ENCODE measurements at regions of chr2 and their contacts with region 1.

Region 1: DNA sequence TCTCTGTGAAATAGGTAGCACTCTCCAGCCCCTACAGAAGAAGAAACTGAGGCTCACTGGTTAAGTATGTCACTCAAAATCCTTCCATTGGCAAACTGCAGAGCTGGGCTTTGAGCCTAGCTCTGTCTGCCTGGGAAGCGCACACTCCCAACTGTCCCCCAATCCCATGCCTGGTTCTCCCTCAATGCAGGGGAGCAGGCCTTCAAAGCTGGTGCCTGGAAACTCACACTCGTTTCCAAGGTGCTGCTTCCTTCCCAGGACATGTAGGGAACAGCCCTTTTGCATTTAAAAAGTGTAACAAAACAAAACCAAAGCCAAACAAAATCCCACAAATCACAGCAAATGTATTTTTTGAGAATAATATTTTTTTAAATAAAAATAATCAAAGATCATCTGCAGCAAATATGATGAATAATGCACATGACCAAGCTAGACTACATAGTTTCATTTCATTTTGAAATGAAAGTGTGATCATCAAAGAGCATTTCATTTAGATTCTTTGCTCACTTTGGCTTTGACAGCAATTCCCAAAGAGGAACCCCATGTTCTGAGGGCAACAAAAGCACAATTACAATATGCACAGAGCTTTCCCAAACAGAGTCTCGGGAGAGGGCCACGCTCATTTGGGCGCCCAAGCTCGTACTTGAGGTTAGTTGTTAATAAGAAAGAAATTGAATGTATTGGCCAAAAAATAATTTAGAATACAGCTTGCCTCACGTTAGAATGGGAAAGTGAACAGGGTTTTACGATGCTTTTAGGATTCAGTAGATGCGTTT is 96.7 kb upstream of the ACKR3 start:
- DNase-seq: no peak
- H3K4me3 ChIP-seq: no peak overlapping the region
- H3K27ac ChIP-seq: no peak overlapping the region
- H3K4me1 ChIP-seq: no peaks in the 10 kb centered on the region
- H3K27me3 ChIP-seq: no peaks in the 10 kb centered on the region
- CTCF ChIP-seq: no peak
- POLR2A ChIP-seq: no peak

Region 2: DNA sequence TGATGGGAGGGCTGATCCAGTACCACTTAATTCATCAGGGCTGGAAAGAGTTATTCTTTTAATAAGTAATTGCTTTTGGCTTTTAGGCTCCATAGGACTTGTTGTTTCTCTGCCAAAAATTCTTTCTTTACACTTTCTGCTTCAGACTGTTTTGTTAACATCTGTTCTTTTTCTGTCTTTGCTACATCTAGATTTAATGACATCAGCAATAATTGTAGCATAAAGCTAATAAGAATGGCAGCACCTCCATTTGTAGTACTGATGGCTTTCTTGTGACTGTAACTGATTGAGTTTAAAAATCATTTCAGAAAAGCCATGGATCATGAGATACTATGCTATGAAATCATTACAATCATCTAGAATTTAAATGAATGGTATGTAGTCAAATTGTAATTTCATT is 50.3 kb after region 1 on chr2:
- intact Hi-C with region 1: loop called (anchors 2 kb)
- DNase-seq: no peak
- H3K4me3 ChIP-seq: no peak overlapping the region
- H3K27ac ChIP-seq: no peak overlapping the region
- H3K4me1 ChIP-seq: no peaks in the 10 kb centered on the region
- H3K27me3 ChIP-seq: no peaks in the 10 kb centered on the region
- CTCF ChIP-seq: no peak
- POLR2A ChIP-seq: no peak

Measured in breast epithelium (tissue), 4 donors.